Posterior vena cava (tissue), 2 donors: ENCODE measurements at regions of chr6 and their contacts with region 1.

Region 1: GRCh38 chr6:108558372-108559096 is 2.2 kb upstream of the FOXO3 start:
- DNase-seq: peak; percentile 100

Region 2: GRCh38 chr6:108655806-108656651 is 97.5 kb after region 1 on chr6:
- intact Hi-C with region 1: loop called in 1 of 2 experiments (anchors 10 kb)
- DNase-seq: no peak

Region 3: DNA sequence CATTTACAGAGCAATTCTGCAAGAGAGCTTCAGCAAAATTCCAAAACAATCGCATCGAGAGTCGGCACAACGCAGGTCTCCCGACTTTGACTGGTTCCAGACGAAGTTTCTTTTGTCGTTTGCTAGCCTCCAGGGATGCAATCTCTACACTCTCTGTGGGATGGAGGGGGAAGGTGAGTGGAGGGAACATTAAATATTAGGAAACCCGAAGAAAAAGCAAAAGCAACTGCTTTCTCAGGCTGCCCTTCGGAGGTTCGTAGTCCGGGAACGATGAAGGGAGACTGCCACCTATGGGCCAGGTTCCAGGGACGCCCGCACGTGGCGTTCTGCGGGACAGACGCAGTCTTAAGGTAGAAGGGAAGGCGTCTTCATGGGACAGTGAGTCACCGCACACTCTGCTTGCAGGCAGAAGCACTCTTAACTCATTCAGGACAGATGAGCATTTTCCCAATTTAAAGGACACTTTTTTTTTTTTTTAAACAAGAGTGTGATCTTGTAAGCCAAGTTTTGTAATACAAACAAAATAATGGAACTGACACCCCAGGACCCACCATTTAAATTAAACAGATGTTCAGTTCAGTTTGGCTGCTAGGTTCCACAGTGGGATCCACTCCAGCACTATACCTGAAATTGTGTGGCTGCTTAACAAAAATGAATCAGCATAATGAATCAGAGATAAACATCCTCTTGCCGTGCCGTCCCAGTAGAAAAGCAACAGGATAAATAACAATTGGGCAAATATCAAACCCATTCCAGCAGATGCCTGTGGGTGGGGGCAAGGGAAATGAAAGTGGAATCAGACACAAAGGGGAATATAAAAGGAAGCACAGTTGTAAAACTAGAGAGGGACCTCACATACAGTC is 223.9 kb after region 1 on chr6:
- intact Hi-C with region 1: loop called in 1 of 2 experiments (anchors 1 kb)
- DNase-seq: peak; percentile 95

Region 4: DNA sequence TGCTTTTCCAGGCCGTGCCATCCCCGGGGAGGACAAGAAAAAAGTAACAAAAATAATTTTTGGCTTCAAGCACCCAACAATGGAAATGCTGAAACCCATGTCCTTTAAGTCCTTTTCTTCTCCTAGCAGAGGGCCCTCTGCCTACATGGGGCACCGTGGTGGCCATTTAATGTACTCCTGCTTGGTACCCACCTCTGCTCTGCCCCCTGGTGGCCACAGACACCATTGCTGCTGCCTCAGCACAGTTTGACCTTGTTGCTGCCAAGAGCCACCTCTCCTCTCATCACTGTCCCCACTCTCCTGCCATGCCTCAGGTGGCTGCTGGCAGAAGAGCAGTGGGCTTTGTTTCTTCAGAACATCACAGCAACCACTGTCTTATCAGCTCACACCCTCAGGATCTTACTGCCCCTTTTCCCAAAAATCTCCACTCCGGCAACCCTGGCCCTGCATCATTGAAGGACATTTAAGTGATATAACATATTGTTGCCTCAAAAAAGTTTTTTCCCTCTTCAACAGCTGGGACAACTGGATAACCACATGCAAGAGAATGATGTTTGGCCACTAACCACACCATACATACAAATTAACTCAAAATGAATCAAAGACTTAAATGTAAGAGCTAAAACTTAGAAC is 276.8 kb after region 1 on chr6:
- intact Hi-C with region 1: loop called in 1 of 2 experiments (anchors 5 kb)
- DNase-seq: peak; percentile 96

Region 5: GRCh38 chr6:109695468-109695867 is 1136.9 kb after region 1 on chr6:
- intact Hi-C with region 1: no loop called
- DNase-seq: no peak